Endothelial cell of umbilical vein (primary cell): ENCODE measurements at regions of chr3 and their contacts with region 1.

Region 1: GRCh38 chr3:29693863-29694262 is 413.0 kb downstream of the RBMS3 start:
- DNase-seq: peak; percentile 78
- H3K4me3 ChIP-seq: no peak overlapping the region
- H3K27ac ChIP-seq: peak overlapping the region; percentile 98
- H3K4me1 ChIP-seq: peaks cover 34% of the 10 kb centered on the region
- H3K27me3 ChIP-seq: no peaks in the 10 kb centered on the region
- CTCF ChIP-seq: no peak
- POLR2A ChIP-seq: no peak

Region 2: DNA sequence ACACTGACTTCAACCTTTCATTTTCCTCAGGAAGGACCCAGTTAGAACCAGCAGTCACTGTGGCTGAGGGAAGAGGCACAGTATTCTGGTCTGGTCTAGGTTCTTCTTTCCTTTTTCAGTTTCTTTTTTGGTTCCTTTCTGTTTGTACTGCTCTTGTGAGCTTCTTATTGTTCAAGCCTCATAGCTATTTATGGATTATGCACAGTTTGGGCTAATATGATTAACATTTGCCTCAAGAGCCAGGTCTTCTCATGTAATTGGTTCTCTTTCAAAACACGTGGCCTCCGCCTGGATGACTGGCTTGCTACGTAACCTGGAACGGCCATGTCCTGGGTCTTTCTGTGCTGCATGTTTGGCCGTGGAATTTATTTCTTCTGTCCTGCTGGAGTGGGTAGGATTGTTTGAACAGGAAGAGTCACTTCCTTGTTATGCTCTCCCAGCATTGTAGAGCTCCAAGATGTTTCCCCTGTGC is 369.6 kb before region 1 on chr3:
- CTCF ChIA-PET with region 1: no interaction called
- POLR2A ChIA-PET with region 1: no interaction called
- dilution Hi-C with region 1: no loop called
- intact Hi-C with region 1: loop called (anchors 1 kb)
- DNase-seq: peak; percentile 98
- H3K4me3 ChIP-seq: peak overlapping the region in 2 of 3 experiments; percentile 22 to 49
- H3K27ac ChIP-seq: peak overlapping the region; percentile 98
- H3K4me1 ChIP-seq: peaks cover 22% of the 10 kb centered on the region
- H3K27me3 ChIP-seq: no peaks in the 10 kb centered on the region
- CTCF ChIP-seq: no peak
- POLR2A ChIP-seq: peak; percentile 69

Region 3: GRCh38 chr3:29397406-29397805 is 296.5 kb before region 1 on chr3:
- CTCF ChIA-PET with region 1: no interaction called
- POLR2A ChIA-PET with region 1: no interaction called
- dilution Hi-C with region 1: no loop called
- intact Hi-C with region 1: no loop called
- DNase-seq: no peak
- H3K4me3 ChIP-seq: no peak overlapping the region
- H3K27ac ChIP-seq: no peak overlapping the region
- H3K4me1 ChIP-seq: no peaks in the 10 kb centered on the region
- H3K27me3 ChIP-seq: no peaks in the 10 kb centered on the region
- CTCF ChIP-seq: no peak
- POLR2A ChIP-seq: no peak

Region 4: DNA sequence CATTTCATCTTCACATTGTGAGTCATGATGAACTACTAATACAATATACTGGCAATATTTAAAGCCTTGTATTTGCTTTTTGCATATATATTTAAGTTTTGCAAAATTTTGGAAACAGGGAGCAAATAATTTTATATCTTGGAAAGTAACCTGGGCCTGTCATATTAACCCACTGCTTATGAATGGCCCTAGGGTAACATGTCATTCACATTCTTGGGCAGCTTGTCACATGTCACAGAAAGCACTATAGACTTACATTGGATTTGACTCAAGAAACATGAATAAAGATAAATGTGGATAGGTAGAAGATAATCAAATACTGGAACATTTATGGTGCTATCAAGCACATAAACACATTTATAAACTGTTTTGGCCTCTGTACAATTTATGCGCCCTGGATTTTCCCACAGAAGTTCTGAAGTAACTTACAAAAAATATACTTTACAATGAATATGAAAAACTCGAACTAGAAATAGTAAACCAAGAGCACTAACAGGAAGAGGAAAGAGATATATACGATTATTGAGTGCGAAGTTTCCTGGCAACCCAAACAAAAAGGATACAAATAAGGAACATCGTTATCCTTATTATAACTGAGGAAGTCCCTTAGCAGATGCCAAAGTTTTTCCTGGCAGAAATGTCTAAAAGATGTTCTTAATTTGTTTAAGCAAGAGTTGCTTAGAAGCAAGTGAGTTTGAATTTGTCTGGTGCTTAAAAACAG is 155.8 kb before region 1 on chr3:
- CTCF ChIA-PET with region 1: no interaction called
- POLR2A ChIA-PET with region 1: no interaction called
- dilution Hi-C with region 1: no loop called
- intact Hi-C with region 1: loop called (anchors 2 kb)
- DNase-seq: peak; percentile 77
- H3K4me3 ChIP-seq: no peak overlapping the region
- H3K27ac ChIP-seq: peak overlapping the region; percentile 40
- H3K4me1 ChIP-seq: peaks cover 26% of the 10 kb centered on the region
- H3K27me3 ChIP-seq: no peaks in the 10 kb centered on the region
- CTCF ChIP-seq: no peak
- POLR2A ChIP-seq: no peak

Region 5: GRCh38 chr3:29627136-29628117 is 66.4 kb before region 1 on chr3:
- CTCF ChIA-PET with region 1: no interaction called
- POLR2A ChIA-PET with region 1: no interaction called
- dilution Hi-C with region 1: no loop called
- intact Hi-C with region 1: loop called (anchors 1 kb)
- DNase-seq: peak; percentile 50
- H3K4me3 ChIP-seq: no peak overlapping the region
- H3K27ac ChIP-seq: no peak overlapping the region
- H3K4me1 ChIP-seq: peaks cover 23% of the 10 kb centered on the region
- H3K27me3 ChIP-seq: no peaks in the 10 kb centered on the region
- CTCF ChIP-seq: no peak
- POLR2A ChIP-seq: no peak

Region 6: GRCh38 chr3:29922992-29923746 is 229.3 kb after region 1 on chr3:
- CTCF ChIA-PET with region 1: no interaction called
- POLR2A ChIA-PET with region 1: no interaction called
- dilution Hi-C with region 1: no loop called
- intact Hi-C with region 1: loop called (anchors 1 kb)
- DNase-seq: peak; percentile 85
- H3K4me3 ChIP-seq: no peak overlapping the region
- H3K27ac ChIP-seq: peak overlapping the region; percentile 34
- H3K4me1 ChIP-seq: peaks cover 15% of the 10 kb centered on the region
- H3K27me3 ChIP-seq: no peaks in the 10 kb centered on the region
- CTCF ChIP-seq: no peak
- POLR2A ChIP-seq: no peak